ENCODE measurements at regions of chr11 and their contacts with region 1.

Region 1: GRCh38 chr11:46513934-46514342 is 79.9 kb downstream of the AMBRA1 start:
- DNase-seq: no peak
- ATAC-seq: no peak
- H3K4me3 ChIP-seq: no peak overlapping the region
- H3K4me3 Mint-ChIP-seq: no peak overlapping the region
- H3K27ac ChIP-seq: no peak overlapping the region
- H3K27ac Mint-ChIP-seq: no peak overlapping the region
- H3K4me1 ChIP-seq: no peaks in the 10 kb centered on the region
- H3K4me1 Mint-ChIP-seq: peaks cover 9% of the 10 kb centered on the region
- H3K27me3 ChIP-seq: no peaks in the 10 kb centered on the region
- H3K27me3 Mint-ChIP-seq: no peaks in the 10 kb centered on the region
- CTCF ChIP-seq: no peak

Region 2: DNA sequence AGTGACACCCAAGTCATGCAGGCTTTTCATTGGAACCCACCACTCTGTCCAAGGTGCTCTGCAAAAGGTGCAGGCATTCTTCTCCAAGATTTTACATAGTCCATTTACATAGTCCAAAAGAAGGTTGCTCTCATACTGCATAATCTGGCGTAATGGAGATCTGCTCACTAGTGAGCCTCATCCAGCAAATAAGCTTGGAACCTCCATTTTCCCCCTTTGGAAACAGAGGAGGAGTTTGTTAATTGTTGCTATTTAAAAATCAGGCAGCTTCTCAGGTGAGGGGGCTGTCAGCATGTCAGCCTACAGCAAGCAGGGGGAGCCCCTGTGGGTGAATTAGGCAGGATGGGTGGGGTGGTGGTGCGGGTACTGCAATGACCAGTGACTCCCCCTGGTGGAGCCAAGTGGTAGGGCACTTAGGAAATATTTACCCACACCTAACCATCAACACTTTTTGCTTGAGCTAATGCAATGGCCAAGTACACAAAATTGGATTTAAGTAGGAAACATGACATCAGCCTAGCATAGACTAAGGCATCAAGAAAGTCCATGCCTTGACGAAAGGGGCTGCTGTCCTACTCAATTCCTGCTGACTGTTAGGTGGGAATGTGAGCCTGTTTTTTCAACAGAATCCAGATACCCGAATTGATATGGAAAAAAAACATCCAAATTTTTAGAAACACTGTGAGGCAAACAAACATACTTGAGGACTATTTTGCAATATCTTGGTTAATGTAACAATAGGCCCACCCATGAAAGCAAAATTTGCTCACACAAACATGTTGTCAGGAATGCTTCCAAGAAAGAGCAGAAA is 15.4 kb after region 1 on chr11:
- CTCF ChIA-PET with region 1: interaction called, 10 read pairs
- POLR2A ChIA-PET with region 1: no interaction called
- intact Hi-C with region 1: no loop called
- DNase-seq: peak; percentile 53 to 84 (median 66)
- ATAC-seq: peak; percentile 99
- H3K4me3 ChIP-seq: no peak overlapping the region
- H3K4me3 Mint-ChIP-seq: no peak overlapping the region
- H3K27ac ChIP-seq: no peak overlapping the region
- H3K27ac Mint-ChIP-seq: no peak overlapping the region
- H3K4me1 ChIP-seq: peaks cover 10% of the 10 kb centered on the region
- H3K4me1 Mint-ChIP-seq: peaks cover 38% of the 10 kb centered on the region
- H3K27me3 ChIP-seq: no peaks in the 10 kb centered on the region
- H3K27me3 Mint-ChIP-seq: no peaks in the 10 kb centered on the region
- CTCF ChIP-seq: peak; percentile 97